Right lobe of liver (tissue), 6 donors: ENCODE measurements at regions of chr18 and their contacts with region 1.

Region 1: DNA sequence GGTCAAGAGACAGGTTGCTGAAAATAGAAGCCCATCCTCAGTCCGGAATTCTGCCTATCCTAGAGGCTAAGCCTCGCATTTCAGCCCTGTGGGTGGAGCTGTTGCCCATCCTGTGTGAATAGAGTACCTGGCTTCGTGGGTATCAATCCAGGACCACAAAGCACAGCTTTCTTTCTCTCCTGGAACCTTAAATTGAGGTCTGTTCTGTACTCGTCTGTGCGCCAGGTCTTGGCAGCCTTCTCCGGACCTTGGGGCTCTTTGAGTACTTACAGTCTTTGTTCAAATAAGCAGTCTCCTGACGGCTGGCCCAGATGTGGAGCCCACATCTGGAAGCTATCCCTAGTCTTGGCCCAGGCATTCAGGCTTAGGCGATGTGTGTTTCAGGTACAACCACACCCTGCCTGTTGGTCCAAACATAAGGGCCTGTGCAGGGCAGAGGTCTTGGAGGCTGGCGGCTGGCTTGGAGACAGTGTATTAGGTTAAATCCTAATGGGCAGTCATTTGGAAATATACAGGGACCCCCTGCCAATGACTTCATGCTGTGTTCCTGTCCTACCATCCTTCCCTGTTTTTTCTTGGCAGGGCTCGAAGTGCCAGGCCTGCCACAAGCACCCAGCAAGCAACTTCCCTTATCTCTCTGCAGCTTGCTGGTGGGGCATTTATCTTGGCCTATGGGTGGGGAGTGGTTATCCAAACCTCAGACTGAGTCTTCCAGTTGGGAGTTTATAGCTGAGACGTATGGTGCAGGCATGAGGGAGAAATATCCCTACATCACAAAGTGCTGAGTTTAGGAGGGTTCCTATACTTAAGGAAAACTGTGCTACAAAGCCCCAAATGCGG is 294.1 kb downstream of the BCL2 start:
- DNase-seq: no peak
- ATAC-seq: peak; percentile 50 to 77 (median 64)
- H3K4me3 ChIP-seq: no peak overlapping the region
- H3K27ac ChIP-seq: no peak overlapping the region
- H3K4me1 ChIP-seq: no peaks in the 10 kb centered on the region
- H3K27me3 ChIP-seq: no peaks in the 10 kb centered on the region
- CTCF ChIP-seq: peak; percentile 26 to 46 (median 33)
- POLR2A ChIP-seq: no peak

Region 2: DNA sequence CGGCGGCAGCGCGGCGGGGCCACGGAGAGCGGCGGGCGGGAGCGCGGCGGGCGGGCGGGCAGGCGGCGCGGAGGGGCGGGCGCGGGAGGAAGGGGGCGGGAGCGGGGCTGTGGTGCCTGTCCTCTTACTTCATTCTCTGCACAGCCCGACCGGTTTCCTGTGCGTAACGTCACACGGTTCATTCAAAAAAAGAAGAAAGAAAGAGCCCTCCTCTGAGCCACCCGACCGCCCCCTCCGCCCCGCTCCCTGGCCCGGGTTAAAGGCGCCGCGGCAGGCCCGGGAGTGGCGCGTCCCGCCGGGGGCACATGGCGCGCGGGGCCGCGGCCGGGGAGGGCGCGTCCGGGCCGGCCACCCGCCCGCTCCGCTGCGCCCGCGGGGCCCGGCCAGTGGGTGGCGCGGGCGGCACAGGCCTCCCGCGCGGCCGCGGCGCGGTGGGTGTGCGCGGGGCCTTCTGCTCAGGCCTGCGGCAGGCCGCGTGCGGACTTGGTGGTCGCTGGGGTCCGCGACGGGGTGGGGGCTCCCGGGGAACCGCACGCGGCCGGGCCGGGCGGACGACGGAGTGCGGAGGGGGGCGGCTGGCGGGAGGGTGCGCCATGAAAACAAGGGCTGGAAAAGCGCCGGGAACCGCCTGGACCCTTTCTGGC is 294.7 kb after region 1 on chr18:
- intact Hi-C with region 1: loop called (anchors 10 kb)
- DNase-seq: peak; percentile 83 to 85 (median 84)
- ATAC-seq: peak; percentile 69 to 82 (median 78)
- H3K4me3 ChIP-seq: peak overlapping the region; percentile 54 to 65 (median 61)
- H3K27ac ChIP-seq: peak overlapping the region in 2 of 3 donors; percentile 32 to 65
- H3K4me1 ChIP-seq: peaks cover 0 to 22% (median 0%) of the 10 kb centered on the region in 4 donors
- H3K27me3 ChIP-seq: peaks cover 0 to 6% of the 10 kb centered on the region in 2 donors
- CTCF ChIP-seq: peak in 2 of 4 donors; percentile 27 to 37
- POLR2A ChIP-seq: peak; percentile 41